ENCODE measurements at regions of chr2 and their contacts with region 1.

Region 1: DNA sequence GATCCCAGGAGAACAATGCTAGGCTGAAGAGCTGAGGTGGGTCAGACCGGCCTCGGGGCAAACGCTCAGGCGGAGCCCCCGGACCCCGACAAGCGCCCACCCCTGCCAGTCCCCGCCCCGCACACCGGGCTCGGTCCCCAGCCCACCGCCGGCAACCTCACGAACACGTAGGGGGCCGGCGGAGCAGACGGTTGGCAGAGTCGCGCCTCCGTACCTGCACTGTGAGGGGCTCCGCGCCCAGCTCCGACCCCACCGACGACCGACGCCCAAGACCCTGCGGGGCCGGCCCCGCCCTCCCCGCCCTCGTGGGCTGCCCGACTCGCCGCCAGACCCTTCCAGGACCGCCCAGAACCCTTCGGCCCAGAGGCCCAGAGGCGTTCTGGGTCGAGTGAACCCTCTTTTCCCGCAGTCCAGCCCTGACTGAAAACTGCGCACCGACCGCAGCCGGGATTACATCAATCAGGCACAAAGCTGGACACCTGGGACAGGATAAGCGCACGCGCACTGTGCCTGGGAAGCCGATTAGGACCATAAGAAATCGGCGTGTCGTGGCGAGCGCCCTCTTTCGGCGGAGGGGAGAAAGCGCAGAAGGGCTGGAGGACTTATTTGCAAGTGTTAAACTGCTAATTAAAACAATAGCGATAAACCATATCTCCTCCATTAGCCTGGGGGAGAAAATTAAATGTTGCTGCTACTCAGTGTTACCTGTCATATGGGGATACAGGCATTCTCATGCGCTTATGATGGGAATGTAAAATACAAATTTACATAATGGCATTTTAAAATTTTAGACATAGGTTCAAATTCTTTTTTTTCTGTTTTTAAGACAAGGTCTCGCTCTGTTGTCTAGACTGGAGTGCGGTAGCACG is 11.7 kb upstream of the DCTN1 start:
- DNase-seq: peak; percentile 94 to 95
- ATAC-seq: peak; percentile 86 to 93 (median 90)
- H3K4me3 ChIP-seq: peak overlapping the region; percentile 67 to 98 (median 94)
- H3K27ac ChIP-seq: peak overlapping the region; percentile 89 to 98 (median 95)
- H3K4me1 ChIP-seq: peaks cover 5 to 47% (median 43%) of the 10 kb centered on the region in 9 donors
- H3K27me3 ChIP-seq: no peaks in the 10 kb centered on the region
- CTCF ChIP-seq: peak; percentile 96 to 99 (median 98)

Region 2: DNA sequence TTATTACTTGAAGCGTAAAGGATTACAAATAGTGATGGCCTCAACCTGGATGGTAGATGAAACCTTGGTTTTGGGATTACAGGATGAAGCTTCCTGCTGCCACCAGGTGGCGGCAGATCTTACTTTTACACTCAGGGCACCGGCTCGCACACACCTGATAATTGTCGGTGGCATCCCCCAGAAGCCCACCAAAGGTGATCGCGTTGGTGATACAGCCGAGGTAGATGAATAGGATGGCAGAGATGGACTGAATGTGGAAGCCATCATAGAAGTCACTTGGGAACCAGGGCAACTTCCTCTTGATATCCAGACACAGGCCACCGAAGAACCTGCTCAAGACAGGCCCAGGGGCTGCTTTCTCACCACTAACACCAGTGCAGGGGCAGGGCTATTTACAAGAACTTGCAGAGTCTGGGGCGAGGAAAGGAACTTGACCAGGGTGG is 141.6 kb before region 1 on chr2:
- intact Hi-C with region 1: loop called in 2 of 10 experiments (anchors 5 kb)
- DNase-seq: peak; percentile 25 to 36
- ATAC-seq: peak in 1 of 8 donors; percentile 31
- H3K4me3 ChIP-seq: no peak overlapping the region
- H3K27ac ChIP-seq: no peak overlapping the region
- H3K4me1 ChIP-seq: peaks cover 0 to 11% (median 0%) of the 10 kb centered on the region in 9 donors
- H3K27me3 ChIP-seq: no peaks in the 10 kb centered on the region
- CTCF ChIP-seq: peak; percentile 56 to 84 (median 75)

Region 3: GRCh38 chr2:74261204-74261864 is 130.5 kb before region 1 on chr2:
- intact Hi-C with region 1: loop called in 1 of 10 experiments (anchors 10 kb)
- DNase-seq: peak; percentile 28 to 51
- ATAC-seq: peak in 7 of 8 donors; percentile 46 to 81 (median 76)
- H3K4me3 ChIP-seq: no peak overlapping the region
- H3K27ac ChIP-seq: peak overlapping the region in 1 of 10 donors; percentile 6
- H3K4me1 ChIP-seq: peaks cover 0 to 3% (median 0%) of the 10 kb centered on the region in 9 donors
- H3K27me3 ChIP-seq: no peaks in the 10 kb centered on the region
- CTCF ChIP-seq: peak; percentile 15 to 71 (median 49)

Region 4: GRCh38 chr2:74278176-74278575 is 113.6 kb before region 1 on chr2:
- intact Hi-C with region 1: loop called in 1 of 10 experiments (anchors 10 kb)
- DNase-seq: peak in 1 of 2 donors; percentile 11
- ATAC-seq: peak in 4 of 8 donors; percentile 33 to 51 (median 42)
- H3K4me3 ChIP-seq: no peak overlapping the region
- H3K27ac ChIP-seq: no peak overlapping the region
- H3K4me1 ChIP-seq: peaks cover 0 to 5% (median 0%) of the 10 kb centered on the region in 9 donors
- H3K27me3 ChIP-seq: no peaks in the 10 kb centered on the region
- CTCF ChIP-seq: peak in 1 of 9 donors; percentile 13

Region 5: DNA sequence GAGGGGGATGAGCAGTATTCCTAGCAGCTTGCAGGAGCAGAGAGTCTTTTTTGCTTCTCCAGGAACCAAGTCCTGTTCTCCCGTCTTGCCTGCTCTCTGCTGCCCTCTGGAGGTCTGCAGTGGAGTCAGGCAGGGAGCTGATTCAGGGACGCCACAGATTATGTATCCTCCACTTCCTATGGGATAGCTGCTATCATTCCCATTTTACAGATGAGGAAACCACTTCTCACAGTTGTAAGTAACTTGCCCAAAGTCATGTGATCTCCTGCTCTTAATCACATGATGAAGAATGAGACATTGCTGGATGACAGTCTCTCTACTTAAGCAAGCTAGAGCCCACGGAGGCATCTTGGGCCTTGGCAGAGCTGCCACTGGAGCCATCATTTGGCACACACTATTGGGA is 56.9 kb before region 1 on chr2:
- intact Hi-C with region 1: loop called in 6 of 10 experiments (anchors 5 kb)
- DNase-seq: peak; percentile 74 to 76
- ATAC-seq: peak; percentile 74 to 86 (median 82)
- H3K4me3 ChIP-seq: no peak overlapping the region
- H3K27ac ChIP-seq: no peak overlapping the region
- H3K4me1 ChIP-seq: peaks cover 0 to 6% (median 0%) of the 10 kb centered on the region in 9 donors
- H3K27me3 ChIP-seq: no peaks in the 10 kb centered on the region
- CTCF ChIP-seq: peak; percentile 85 to 99 (median 95)

Region 6: DNA sequence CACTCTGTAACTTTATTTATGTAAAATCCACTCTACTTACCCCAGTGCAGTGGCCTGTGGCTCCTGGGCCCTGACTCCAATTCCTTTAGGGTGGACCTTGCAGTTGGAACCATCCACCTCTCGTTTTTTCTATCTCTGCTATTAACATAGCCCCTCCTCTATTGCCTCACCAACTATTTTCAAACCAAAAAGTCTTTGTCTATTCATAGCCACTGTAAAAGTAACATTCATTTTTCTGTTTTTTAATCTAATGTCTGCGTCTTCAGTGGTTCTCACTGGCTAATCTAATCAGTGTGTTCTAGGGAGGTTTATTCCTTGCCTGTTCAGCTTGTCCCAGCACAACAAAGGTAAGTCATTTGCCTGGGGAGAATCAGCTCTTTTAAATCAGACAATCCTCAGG is 48.5 kb before region 1 on chr2 and contains the start of gene SLC4A5:
- intact Hi-C with region 1: loop called in 2 of 10 experiments (anchors 5 kb)
- DNase-seq: no peak
- ATAC-seq: no peak
- H3K4me3 ChIP-seq: no peak within 1 kb of the TSS
- H3K27ac ChIP-seq: no peak within 1 kb of the TSS
- H3K4me1 ChIP-seq: no peaks in the 10 kb centered on the region
- H3K27me3 ChIP-seq: no peaks in the 10 kb centered on the region
- CTCF ChIP-seq: no peak
- total RNA-seq, gene SLC4A5: 0.82 to 4.6 (median 1.9) TPM